Breast epithelium (tissue), 4 donors: ENCODE measurements at regions of chr18 and their contacts with region 1.

Region 1: DNA sequence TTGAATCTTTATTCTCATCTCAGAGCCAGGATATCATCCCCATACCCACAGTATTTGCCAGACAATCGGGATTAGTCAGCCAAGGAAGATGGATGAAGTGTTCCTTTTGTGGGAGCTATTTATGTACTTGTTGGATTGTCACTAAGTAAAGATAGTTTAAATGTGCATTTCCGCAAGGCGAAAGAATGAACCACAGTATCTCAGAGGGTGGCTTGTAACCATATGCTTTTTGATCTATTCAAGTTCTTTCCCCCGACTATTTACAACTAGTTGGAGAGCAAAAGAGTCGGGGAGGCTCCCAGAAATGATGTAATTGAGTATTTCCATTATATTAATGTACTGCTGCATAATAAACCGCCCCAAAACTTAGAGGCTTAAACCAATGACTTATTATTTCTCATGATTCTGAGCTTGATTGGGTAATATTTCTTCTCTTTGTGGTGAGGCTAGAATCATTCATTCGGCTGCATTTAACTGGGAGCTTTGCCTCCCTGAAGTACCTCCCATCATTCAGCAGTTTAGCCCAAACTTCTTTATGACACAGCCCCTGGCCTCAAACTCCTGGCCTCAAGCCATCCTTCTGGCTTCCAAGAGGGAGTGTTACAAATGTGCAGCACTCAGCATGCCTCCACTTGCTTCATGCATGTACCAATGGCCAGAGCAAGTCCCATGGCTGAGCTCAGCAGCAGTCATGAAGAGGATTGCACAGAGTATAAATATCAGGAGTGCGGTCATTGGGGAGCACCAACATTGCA is 423.7 kb downstream of the METTL4 start:
- DNase-seq: no peak
- H3K4me3 ChIP-seq: no peak overlapping the region
- H3K27ac ChIP-seq: no peak overlapping the region
- H3K4me1 ChIP-seq: no peaks in the 10 kb centered on the region
- H3K27me3 ChIP-seq: no peaks in the 10 kb centered on the region
- CTCF ChIP-seq: no peak
- POLR2A ChIP-seq: no peak

Region 2: DNA sequence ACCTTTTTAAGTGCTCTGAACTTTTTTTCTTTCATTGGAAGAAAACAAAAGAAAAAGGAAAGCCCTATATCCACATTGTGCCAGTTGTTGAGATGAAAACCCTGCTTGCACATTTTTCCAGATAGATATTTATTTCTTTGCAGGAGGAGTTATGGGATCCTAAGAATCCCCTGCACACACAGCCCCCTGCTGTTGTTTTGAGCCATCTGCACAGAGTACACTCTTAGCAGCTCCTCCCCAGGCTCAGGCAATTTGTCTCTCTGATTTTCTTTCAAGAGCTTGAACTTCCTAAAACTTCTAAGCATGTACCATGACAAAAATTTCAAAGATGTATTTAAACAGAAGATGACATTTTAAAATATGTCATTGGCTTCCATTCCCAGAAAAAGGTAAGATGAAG is 13.3 kb before region 1 on chr18:
- intact Hi-C with region 1: loop called (anchors 2 kb)
- DNase-seq: no peak
- H3K4me3 ChIP-seq: no peak overlapping the region
- H3K27ac ChIP-seq: no peak overlapping the region
- H3K4me1 ChIP-seq: no peaks in the 10 kb centered on the region
- H3K27me3 ChIP-seq: no peaks in the 10 kb centered on the region
- CTCF ChIP-seq: no peak
- POLR2A ChIP-seq: no peak